ENCODE measurements at regions of chr2 and their contacts with region 1.

Region 1: GRCh38 chr2:162123806-162124758 is 28.0 kb downstream of the GCG start:
- DNase-seq: no peak
- ATAC-seq: peak; percentile 58

Region 2: GRCh38 chr2:162007447-162008040 is 116.5 kb before region 1 on chr2:
- intact Hi-C with region 1: loop called (anchors 1 kb)
- DNase-seq: no peak
- ATAC-seq: no peak

Region 3: DNA sequence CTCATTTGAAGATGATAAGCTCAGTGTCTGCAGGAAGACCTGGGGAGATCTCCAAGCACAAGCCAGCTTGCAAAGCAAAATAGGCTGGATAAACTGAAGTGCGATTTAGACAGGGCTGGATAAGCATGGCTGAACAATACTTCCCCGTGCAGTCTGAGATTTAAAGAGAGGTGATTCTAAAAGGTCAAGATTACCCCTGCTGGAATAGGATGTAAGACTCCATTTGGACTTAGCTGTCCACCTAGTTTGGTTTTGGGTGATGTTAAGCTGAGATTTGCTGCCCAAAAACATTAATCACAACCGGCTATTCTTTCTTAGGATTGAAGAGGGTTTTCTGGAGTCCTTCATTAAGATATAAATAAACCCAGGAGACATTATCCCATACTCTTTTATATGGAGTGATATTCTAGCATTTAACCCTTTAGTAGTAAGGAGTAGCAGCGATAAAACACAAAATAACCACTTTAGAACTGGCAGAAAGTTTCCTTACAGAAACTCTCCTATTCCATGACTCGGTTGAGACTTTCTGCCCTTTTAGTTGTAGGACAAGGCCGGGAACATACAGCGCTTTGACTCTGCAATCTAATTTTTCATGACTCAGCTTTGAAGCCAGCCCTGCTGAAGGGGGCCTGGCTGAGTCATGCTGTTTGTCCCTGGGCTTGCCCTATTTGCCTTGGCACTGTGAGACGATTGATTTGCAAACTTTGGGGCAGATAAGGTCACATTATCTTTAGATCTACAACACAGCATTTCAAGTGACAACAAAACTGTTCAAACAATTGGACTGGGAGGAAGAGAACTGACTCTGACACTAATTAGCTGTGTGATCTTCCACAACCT is 458.1 kb after region 1 on chr2:
- intact Hi-C with region 1: no loop called
- DNase-seq: no peak
- ATAC-seq: no peak

Measured in left ventricle myocardium superior (tissue), 1 donor.